Activated T-helper 1 cell treated with anti-CD3 and anti-CD28 coated beads, Interleukin-12 subunit alpha, Interleukin-12 subunit beta, Interleukin-2, Interleukin-4 antibody, amounts not matched to agents 30 ng/mL and 10 ng/mL and 1 ng/mL, durations not matched to agents 14 hours and 24 hours and 36 hours (primary cell): ENCODE measurements at regions of chr17 and their contacts with region 1.

Region 1: DNA sequence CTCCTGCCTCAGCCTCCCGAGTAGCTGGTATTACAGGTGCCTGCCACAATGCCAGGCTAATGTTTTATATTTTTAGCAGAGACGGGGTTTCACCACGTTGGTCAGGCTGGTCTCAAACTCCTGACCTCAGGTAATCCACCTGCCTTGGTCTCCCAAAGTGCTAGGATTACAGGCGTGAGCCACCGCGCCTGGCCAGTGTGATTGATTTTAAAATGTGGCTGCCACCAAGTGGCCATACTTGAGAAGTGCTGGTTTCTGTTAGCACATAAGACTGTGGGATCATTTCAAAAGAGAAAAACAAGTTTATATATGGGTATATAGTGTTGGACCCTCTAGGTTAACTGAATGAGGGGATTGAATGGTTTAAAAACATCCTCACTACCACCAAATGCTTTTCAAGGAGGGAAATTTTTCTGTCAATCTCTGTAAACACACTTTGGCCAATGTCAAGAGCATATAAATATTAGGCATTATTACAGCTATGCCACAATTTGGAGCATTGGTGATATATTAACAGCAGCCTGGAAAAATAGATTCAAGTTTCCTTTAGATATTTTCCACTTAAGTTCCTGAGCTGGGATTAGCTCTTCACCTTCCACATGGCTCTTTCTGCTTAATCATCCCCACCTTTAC is 13.5 kb upstream of the DHRS13 start:
- DNase-seq: no peak
- H3K4me3 Mint-ChIP-seq: no peak overlapping the region
- H3K27ac Mint-ChIP-seq: peak overlapping the region; percentile 47
- H3K4me1 Mint-ChIP-seq: peaks cover 18% of the 10 kb centered on the region
- H3K27me3 Mint-ChIP-seq: no peaks in the 10 kb centered on the region

Region 2: DNA sequence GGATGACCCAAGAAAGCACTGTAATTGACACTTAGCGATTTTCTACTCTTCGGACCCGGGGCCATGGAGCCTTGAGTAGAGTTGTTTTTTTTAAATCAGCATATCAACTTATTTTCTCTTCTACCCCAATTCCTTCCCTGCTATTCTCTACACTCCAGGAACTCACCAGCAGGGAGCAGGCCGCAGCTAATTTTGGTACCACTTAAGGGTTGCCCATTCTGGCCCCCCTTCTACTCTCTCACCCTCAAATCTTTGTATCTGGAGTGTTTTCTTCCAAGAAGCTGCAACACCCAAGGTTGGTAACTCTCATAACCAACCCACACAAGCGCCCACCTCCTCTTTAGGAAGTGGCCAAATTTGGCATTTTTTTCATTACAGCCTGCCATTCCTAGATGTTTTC is 67.1 kb before region 1 on chr17:
- intact Hi-C with region 1: loop called (anchors 1 kb)
- DNase-seq: no peak
- H3K4me3 Mint-ChIP-seq: no peak overlapping the region
- H3K27ac Mint-ChIP-seq: no peak overlapping the region
- H3K4me1 Mint-ChIP-seq: peaks cover 4% of the 10 kb centered on the region
- H3K27me3 Mint-ChIP-seq: no peaks in the 10 kb centered on the region

Region 3: GRCh38 chr17:28902819-28903545 is 13.4 kb before region 1 on chr17 and contains the start of gene DHRS13:
- intact Hi-C with region 1: loop called (anchors 2 kb)
- DNase-seq: peak; percentile 93
- H3K4me3 Mint-ChIP-seq: peak within 1 kb of the TSS; percentile 91
- H3K27ac Mint-ChIP-seq: peak within 1 kb of the TSS; percentile 79
- H3K4me1 Mint-ChIP-seq: peaks cover 39% of the 10 kb centered on the region
- H3K27me3 Mint-ChIP-seq: no peaks in the 10 kb centered on the region
- total RNA-seq, gene DHRS13: 34.6 and 34.9 TPM in 2 replicates

Region 4: DNA sequence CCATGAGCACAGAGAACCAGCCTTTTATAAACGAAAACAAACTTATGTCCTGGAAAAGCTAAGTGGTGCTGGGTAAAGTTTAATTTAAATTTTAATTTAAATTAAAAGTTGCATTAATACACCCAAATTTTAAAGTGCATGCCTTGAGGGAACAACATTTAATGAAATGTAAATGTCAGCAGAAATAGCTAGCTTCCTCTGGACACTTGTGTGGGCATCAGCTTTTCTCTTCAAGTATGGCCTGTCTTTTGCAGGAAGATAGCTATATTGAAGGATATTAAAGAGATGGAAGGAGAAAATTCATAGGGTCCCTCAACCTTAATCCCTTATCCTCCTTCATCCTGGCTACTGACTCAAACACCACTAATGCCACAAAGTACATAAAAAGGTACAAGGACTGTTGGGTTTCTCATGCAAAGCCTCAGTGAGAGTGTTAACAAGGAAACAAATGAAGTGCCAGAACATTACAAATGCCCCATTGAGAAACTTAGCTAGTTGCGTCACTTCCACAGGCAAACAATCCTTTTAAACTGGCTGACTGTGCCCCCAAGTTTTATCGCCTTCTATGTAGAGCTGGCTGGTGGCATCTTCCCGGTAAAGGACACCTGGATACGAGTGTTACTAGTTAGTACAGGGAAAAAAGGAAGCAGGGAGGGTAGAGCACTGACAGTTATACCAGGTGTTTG is 20.8 kb after region 1 on chr17:
- intact Hi-C with region 1: no loop called
- DNase-seq: no peak
- H3K4me3 Mint-ChIP-seq: no peak overlapping the region
- H3K27ac Mint-ChIP-seq: no peak overlapping the region
- H3K4me1 Mint-ChIP-seq: peaks cover 73% of the 10 kb centered on the region
- H3K27me3 Mint-ChIP-seq: no peaks in the 10 kb centered on the region